ENCODE measurements at regions of chr1 and their contacts with region 1.

Region 1: GRCh38 chr1:27525296-27526272 is 35.6 kb upstream of the WASF2 start:
- DNase-seq: peak in 8 of 9 experiments; percentile 25 to 74 (median 49)
- ATAC-seq: no peak
- H3K4me3 ChIP-seq: peak overlapping the region; percentile 21 to 47
- H3K4me3 Mint-ChIP-seq: peak overlapping the region; percentile 66
- H3K27ac ChIP-seq: peak overlapping the region; percentile 63 to 66
- H3K27ac Mint-ChIP-seq: peak overlapping the region; percentile 85
- H3K4me1 ChIP-seq: peaks cover 63% of the 10 kb centered on the region
- H3K4me1 Mint-ChIP-seq: peaks cover 73% of the 10 kb centered on the region
- H3K27me3 ChIP-seq: no peaks in the 10 kb centered on the region
- H3K27me3 Mint-ChIP-seq: no peaks in the 10 kb centered on the region
- CTCF ChIP-seq: no peak

Region 2: DNA sequence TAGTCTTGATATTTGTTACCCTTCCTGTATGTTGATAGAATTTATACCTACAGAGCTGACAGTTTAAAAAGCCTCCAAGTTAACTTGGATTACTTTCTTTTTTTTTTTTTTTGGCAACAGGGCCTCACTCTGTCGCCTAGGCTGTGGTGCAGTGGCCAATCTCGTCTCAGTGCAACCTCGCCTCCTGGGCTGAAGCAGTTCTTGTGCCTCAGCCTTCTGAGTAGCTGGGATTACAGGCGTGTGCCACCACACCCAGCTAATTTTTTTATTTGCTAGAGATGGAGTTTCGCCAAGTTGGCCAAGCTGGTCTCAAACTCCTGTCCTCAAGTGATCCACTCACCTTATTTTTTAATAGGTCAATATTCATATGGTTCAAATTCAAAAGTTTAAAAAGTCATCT is 258.4 kb before region 1 on chr1:
- CTCF ChIA-PET with region 1: no interaction called
- POLR2A ChIA-PET with region 1: interaction called, 10 read pairs
- intact Hi-C with region 1: no loop called
- DNase-seq: no peak
- ATAC-seq: no peak
- H3K4me3 ChIP-seq: no peak overlapping the region
- H3K4me3 Mint-ChIP-seq: no peak overlapping the region
- H3K27ac ChIP-seq: no peak overlapping the region
- H3K27ac Mint-ChIP-seq: no peak overlapping the region
- H3K4me1 ChIP-seq: no peaks in the 10 kb centered on the region
- H3K4me1 Mint-ChIP-seq: no peaks in the 10 kb centered on the region
- H3K27me3 ChIP-seq: no peaks in the 10 kb centered on the region
- H3K27me3 Mint-ChIP-seq: no peaks in the 10 kb centered on the region
- CTCF ChIP-seq: no peak

Region 3: DNA sequence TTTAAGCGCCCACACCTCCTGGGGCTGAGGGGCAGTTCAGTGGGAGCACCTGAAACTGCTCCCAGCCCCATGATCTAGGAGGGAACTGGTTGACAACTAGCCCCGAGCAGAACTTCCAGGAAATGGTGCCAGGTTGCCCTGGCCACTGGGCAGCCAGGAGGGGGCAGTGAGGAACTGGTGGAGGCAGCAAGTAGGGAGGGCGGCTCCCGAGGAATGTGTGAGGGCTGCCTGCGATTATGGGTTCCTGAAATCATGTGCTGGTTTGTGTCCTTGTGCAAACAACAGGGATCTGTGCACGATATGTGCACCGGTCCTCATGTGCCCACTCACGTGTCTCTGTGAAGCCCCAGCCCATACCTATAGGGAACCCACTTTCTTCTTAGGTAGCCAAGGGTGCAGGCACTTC is 123.2 kb before region 1 on chr1:
- CTCF ChIA-PET with region 1: no interaction called
- POLR2A ChIA-PET with region 1: no interaction called
- intact Hi-C with region 1: loop called in 1 of 2 experiments (anchors 2 kb)
- DNase-seq: peak in 3 of 9 experiments; percentile 23 to 50 (median 27)
- ATAC-seq: no peak
- H3K4me3 ChIP-seq: no peak overlapping the region
- H3K4me3 Mint-ChIP-seq: no peak overlapping the region
- H3K27ac ChIP-seq: peak overlapping the region in 1 of 2 experiments; percentile 31
- H3K27ac Mint-ChIP-seq: peak overlapping the region; percentile 91
- H3K4me1 ChIP-seq: peaks cover 19% of the 10 kb centered on the region
- H3K4me1 Mint-ChIP-seq: peaks cover 32% of the 10 kb centered on the region
- H3K27me3 ChIP-seq: no peaks in the 10 kb centered on the region
- H3K27me3 Mint-ChIP-seq: no peaks in the 10 kb centered on the region
- CTCF ChIP-seq: no peak

Region 4: GRCh38 chr1:27416387-27417111 is 109.0 kb before region 1 on chr1:
- CTCF ChIA-PET with region 1: interaction called, 5 read pairs
- POLR2A ChIA-PET with region 1: no interaction called
- intact Hi-C with region 1: loop called in 1 of 2 experiments (anchors 5 kb)
- DNase-seq: peak in 6 of 9 experiments; percentile 30 to 81 (median 57)
- ATAC-seq: peak; percentile 74
- H3K4me3 ChIP-seq: no peak overlapping the region
- H3K4me3 Mint-ChIP-seq: no peak overlapping the region
- H3K27ac ChIP-seq: no peak overlapping the region
- H3K27ac Mint-ChIP-seq: peak overlapping the region; percentile 37
- H3K4me1 ChIP-seq: peaks cover 19% of the 10 kb centered on the region
- H3K4me1 Mint-ChIP-seq: peaks cover 33% of the 10 kb centered on the region
- H3K27me3 ChIP-seq: no peaks in the 10 kb centered on the region
- H3K27me3 Mint-ChIP-seq: no peaks in the 10 kb centered on the region
- CTCF ChIP-seq: peak; percentile 56

Region 5: GRCh38 chr1:27568300-27569087 is 42.9 kb after region 1 on chr1:
- CTCF ChIA-PET with region 1: interaction called, 9 read pairs
- POLR2A ChIA-PET with region 1: interaction called, 8 read pairs
- intact Hi-C with region 1: loop called (anchors 2 kb)
- DNase-seq: peak; percentile 80 to 96 (median 91)
- ATAC-seq: peak; percentile 92
- H3K4me3 ChIP-seq: peak overlapping the region; percentile 28 to 36
- H3K4me3 Mint-ChIP-seq: peak overlapping the region; percentile 78
- H3K27ac ChIP-seq: peak overlapping the region in 1 of 2 experiments; percentile 58
- H3K27ac Mint-ChIP-seq: peak overlapping the region; percentile 39
- H3K4me1 ChIP-seq: peaks cover 16% of the 10 kb centered on the region
- H3K4me1 Mint-ChIP-seq: peaks cover 25% of the 10 kb centered on the region
- H3K27me3 ChIP-seq: no peaks in the 10 kb centered on the region
- H3K27me3 Mint-ChIP-seq: no peaks in the 10 kb centered on the region
- CTCF ChIP-seq: peak; percentile 71

Region 6: DNA sequence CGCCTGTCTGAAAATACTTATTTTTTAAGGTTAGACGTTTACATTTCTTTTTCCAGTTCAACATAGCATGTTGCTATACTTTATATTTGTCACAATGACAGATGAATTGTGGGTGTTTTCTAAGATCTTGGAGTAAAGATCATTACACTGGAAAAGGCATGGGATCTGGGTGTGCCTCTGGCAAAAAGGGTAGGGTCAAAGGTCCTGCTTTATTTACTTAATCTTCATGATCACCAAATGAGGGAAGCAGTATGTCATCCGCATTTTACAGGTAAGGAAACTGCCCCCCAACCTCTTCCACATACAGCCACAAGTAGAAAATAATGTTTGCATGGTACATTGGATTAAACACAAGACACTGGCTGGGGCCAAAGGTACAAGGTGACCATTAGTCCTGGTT is 396.7 kb after region 1 on chr1:
- CTCF ChIA-PET with region 1: no interaction called
- POLR2A ChIA-PET with region 1: no interaction called
- intact Hi-C with region 1: no loop called
- DNase-seq: no peak
- ATAC-seq: no peak
- H3K4me3 ChIP-seq: no peak overlapping the region
- H3K4me3 Mint-ChIP-seq: no peak overlapping the region
- H3K27ac ChIP-seq: no peak overlapping the region
- H3K27ac Mint-ChIP-seq: no peak overlapping the region
- H3K4me1 ChIP-seq: no peaks in the 10 kb centered on the region
- H3K4me1 Mint-ChIP-seq: no peaks in the 10 kb centered on the region
- H3K27me3 ChIP-seq: no peaks in the 10 kb centered on the region
- H3K27me3 Mint-ChIP-seq: no peaks in the 10 kb centered on the region
- CTCF ChIP-seq: no peak

Measured in CD8-positive, alpha-beta T cell (primary cell).